OCI-LY7 (cell line): ENCODE measurements at regions of chr6 and their contacts with region 1.

Region 1: GRCh38 chr6:154675602-154676088 is 57.6 kb upstream of the SCAF8 start:
- DNase-seq: peak; percentile 94
- H3K4me3 ChIP-seq: no peak overlapping the region
- H3K27ac ChIP-seq: no peak overlapping the region
- H3K4me1 ChIP-seq: no peaks in the 10 kb centered on the region
- CTCF ChIP-seq: peak; percentile 100

Region 2: GRCh38 chr6:154156135-154156896 is 519.3 kb before region 1 on chr6:
- CTCF ChIA-PET with region 1: no interaction called
- POLR2A ChIA-PET with region 1: no interaction called
- intact Hi-C with region 1: loop called (anchors 10 kb)
- DNase-seq: peak; percentile 28
- H3K4me3 ChIP-seq: no peak overlapping the region
- H3K27ac ChIP-seq: no peak overlapping the region
- H3K4me1 ChIP-seq: no peaks in the 10 kb centered on the region
- CTCF ChIP-seq: peak; percentile 72

Region 3: GRCh38 chr6:154726887-154727286 is 51.2 kb after region 1 on chr6:
- CTCF ChIA-PET with region 1: no interaction called
- POLR2A ChIA-PET with region 1: no interaction called
- intact Hi-C with region 1: no loop called
- DNase-seq: no peak
- H3K4me3 ChIP-seq: no peak overlapping the region
- H3K27ac ChIP-seq: no peak overlapping the region
- H3K4me1 ChIP-seq: no peaks in the 10 kb centered on the region
- CTCF ChIP-seq: no peak

Region 4: DNA sequence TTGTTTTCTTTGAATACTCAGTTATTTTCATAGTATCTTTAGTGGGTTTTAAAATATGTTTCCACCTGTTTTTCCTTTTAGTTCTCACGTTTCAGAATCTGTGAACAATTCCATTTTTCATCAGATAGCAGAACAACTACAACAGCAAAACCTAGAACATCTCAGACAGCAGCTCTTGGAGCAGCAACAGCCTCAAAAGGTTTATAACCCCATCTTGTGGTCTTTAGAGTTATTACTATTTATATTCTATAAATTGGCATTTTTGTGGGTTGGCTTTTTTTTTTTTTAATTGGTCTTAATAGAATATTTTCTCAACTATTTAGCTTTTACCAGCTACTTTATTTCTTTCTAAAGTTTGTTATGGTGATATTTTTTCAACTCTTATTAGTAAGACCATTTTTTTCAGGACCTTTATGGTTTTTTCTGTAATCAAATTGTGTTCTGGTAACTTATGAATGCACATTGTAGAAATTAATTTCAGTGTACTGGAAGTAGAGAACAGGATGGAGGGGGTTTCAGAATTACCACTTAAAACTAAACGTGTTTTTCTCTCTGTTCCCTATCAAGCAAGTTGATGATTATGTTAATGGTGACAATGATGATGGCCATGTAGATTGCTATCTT is 129.8 kb after region 1 on chr6:
- CTCF ChIA-PET with region 1: interaction called, 3 read pairs
- POLR2A ChIA-PET with region 1: interaction called, 3 read pairs
- intact Hi-C with region 1: loop called (anchors 1 kb)
- DNase-seq: peak; percentile 59
- H3K4me3 ChIP-seq: no peak overlapping the region
- H3K27ac ChIP-seq: no peak overlapping the region
- H3K4me1 ChIP-seq: peaks cover 3% of the 10 kb centered on the region
- CTCF ChIP-seq: peak; percentile 79

Region 5: GRCh38 chr6:154928325-154928922 is 252.8 kb after region 1 on chr6:
- CTCF ChIA-PET with region 1: interaction called, 4 read pairs
- POLR2A ChIA-PET with region 1: no interaction called
- intact Hi-C with region 1: loop called (anchors 1 kb)
- DNase-seq: peak; percentile 80
- H3K4me3 ChIP-seq: no peak overlapping the region
- H3K27ac ChIP-seq: no peak overlapping the region
- H3K4me1 ChIP-seq: peaks cover 22% of the 10 kb centered on the region
- CTCF ChIP-seq: peak; percentile 98

Region 6: GRCh38 chr6:155248008-155249001 is 572.7 kb after region 1 on chr6:
- CTCF ChIA-PET with region 1: no interaction called
- POLR2A ChIA-PET with region 1: no interaction called
- intact Hi-C with region 1: loop called (anchors 10 kb)
- DNase-seq: peak; percentile 63
- H3K4me3 ChIP-seq: no peak overlapping the region
- H3K27ac ChIP-seq: no peak overlapping the region
- H3K4me1 ChIP-seq: no peaks in the 10 kb centered on the region
- CTCF ChIP-seq: peak; percentile 89